Activated naive CD4-positive, alpha-beta T cell treated with anti-CD3 and anti-CD28 coated beads for 36 hours (primary cell): ENCODE measurements at regions of chr2 and their contacts with region 1.

Region 1: GRCh38 chr2:27032495-27033252 is at the start of gene TMEM214:
- DNase-seq: peak; percentile 83
- H3K4me3 Mint-ChIP-seq: peak within 1 kb of the TSS; percentile 94
- H3K27ac Mint-ChIP-seq: peak within 1 kb of the TSS; percentile 77
- H3K4me1 Mint-ChIP-seq: peaks cover 35% of the 10 kb centered on the region
- H3K27me3 Mint-ChIP-seq: no peaks in the 10 kb centered on the region
- total RNA-seq, gene TMEM214: 38.3 to 41.3 TPM

Region 2: DNA sequence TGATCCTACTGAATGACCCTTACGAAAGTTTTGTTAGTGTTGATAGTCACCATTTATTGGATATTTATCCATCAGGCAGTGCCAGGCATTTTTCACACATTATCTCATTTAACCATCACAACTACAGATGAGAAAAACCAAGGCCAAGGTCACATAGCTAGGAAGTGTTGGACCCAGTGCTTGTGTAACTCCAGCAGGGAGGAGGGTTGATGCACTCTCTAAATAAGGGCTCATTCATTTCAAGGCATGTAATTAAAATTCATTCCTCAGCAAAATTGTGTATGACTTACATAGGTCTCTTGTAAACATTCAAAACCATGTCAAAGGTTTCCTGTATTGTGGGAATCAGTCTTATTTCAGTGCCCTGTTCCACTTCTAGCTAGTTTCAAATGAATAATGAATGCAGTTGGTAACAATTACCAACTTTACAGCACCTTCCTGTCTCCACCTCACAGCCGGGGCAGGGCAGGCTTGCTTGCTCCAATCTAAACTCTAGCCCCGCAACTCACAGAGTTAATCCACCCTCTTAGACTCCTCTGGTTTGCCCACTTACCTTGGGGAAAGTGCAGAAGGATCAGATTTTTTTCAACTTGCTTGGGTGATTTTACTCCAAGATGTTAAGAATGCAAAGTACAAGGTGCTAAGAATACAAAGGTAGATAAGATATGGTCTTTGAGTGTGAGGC is 68.1 kb before region 1 on chr2:
- CTCF ChIA-PET with region 1: interaction called, 6 read pairs
- intact Hi-C with region 1: loop called (anchors 5 kb)
- DNase-seq: no peak
- H3K4me3 Mint-ChIP-seq: no peak overlapping the region
- H3K27ac Mint-ChIP-seq: no peak overlapping the region
- H3K4me1 Mint-ChIP-seq: peaks cover 6% of the 10 kb centered on the region
- H3K27me3 Mint-ChIP-seq: peaks cover 14% of the 10 kb centered on the region

Region 3: DNA sequence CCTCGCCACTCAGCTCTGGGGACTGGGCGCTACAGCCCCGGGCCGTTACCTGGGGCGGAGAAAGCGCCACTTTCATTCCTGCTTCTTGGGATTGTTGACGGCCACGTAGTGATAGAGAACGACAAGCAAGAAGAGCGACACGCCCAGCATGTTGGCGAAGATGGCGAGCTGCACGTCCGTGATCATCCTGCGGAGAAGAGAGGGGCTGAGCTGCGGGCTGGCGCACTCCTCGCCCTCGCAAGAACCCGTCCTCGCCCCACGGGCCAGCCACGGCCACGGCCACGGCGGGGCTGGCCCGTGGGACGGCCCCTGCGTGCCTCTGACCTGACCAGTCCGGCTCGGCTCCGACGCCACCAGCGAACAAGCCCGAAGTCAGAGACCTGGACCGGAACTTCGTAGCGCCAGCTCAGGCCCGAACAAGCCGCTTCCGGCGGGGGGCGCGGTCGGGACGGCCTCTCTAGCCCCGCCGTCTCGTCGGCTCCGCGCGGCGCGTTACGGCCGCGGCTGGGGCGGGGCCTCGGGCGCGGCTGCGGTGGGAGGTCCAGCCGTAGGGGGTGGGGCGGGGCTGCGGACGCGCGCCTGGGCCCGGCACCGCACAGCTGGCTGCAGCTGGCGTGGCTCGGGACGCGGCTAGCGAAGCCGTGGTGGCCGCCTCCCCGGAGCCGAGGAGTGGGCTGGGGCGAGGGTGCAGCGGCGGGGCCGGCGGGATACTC is 38.8 kb after region 1 on chr2 and contains the start of gene OST4:
- CTCF ChIA-PET with region 1: no interaction called
- intact Hi-C with region 1: loop called (anchors 1 kb)
- DNase-seq: peak; percentile 88
- H3K4me3 Mint-ChIP-seq: peak within 1 kb of the TSS; percentile 97
- H3K27ac Mint-ChIP-seq: peak within 1 kb of the TSS; percentile 91
- H3K4me1 Mint-ChIP-seq: peaks cover 76% of the 10 kb centered on the region
- H3K27me3 Mint-ChIP-seq: no peaks in the 10 kb centered on the region
- total RNA-seq, gene OST4: 257 to 282 TPM